ENCODE measurements at regions of chr19 and their contacts with region 1.

Region 1: DNA sequence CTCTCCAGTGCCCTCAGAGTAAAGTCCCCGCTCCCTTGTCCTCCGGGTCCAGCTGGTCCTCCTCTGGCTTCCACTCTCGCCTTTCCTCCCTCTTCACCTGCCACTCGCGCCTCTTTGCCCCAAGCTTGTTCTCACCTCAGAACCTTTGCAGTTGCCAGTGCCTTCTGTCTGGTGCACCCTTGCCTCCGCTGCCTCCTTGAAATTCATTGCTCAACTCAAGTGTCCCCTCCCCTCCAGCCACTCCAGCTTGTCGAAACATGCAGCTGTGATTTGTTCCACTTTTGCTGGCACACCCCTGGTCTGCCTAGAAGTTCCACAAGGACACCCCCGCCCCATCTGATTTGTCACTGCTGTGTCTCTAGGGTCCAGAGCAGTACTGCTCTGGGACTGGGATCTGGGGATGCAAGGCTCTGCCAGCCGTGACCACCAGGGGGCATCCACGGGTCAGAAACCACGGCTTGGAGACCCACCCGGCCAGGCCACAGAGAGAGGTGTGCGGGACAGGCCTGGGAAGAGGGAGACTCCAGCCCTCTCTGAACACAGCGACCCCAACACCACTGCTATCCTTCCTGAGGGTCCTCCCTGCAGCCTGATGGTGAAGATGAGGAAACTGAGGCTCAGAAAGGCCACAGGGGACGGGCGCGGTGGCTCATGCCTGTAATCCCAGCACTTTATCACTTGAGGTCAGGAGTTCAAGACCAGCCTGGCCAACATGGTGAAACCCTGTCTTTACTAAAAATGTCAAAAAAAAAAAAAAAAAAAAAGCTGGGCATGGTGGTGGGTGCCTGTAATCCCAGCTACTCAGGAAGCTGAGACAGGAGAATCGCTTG is 49.9 kb downstream of the AP1M1 start:
- DNase-seq: peak; percentile 48
- H3K4me3 ChIP-seq: no peak overlapping the region
- H3K27ac ChIP-seq: no peak overlapping the region
- H3K4me1 ChIP-seq: no peaks in the 10 kb centered on the region
- H3K27me3 ChIP-seq: no peaks in the 10 kb centered on the region
- CTCF ChIP-seq: peak; percentile 80 to 93

Region 2: GRCh38 chr19:15776991-15777970 is 470.3 kb before region 1 on chr19:
- CTCF ChIA-PET with region 1: no interaction called
- dilution Hi-C with region 1: no loop called
- in situ Hi-C with region 1: no loop called
- intact Hi-C with region 1: no loop called
- DNase-seq: no peak
- H3K4me3 ChIP-seq: no peak overlapping the region
- H3K27ac ChIP-seq: no peak overlapping the region
- H3K4me1 ChIP-seq: no peaks in the 10 kb centered on the region
- H3K27me3 ChIP-seq: no peaks in the 10 kb centered on the region
- CTCF ChIP-seq: no peak

Region 3: DNA sequence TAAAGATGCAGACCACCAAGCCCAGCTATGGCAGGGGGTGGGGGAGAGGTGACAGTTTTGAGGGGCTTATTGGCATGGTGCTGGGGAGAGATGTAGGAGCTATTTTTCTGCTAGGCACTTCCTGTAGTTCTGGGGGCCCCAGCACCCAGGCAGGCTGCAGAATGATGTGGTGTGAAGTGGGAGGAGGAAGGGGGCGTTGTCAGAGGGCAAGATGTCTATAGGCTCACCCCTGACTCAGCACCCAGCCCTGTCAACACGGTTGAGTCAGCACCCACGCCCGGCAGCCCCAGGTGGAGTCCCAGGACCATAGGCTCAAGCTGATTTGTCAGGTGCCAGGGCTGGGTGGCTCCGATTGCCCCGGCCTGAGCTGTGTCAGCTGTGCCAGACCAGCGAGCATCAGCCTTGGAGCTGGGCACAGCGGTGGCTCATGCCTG is 82.8 kb after region 1 on chr19:
- CTCF ChIA-PET with region 1: no interaction called
- dilution Hi-C with region 1: no loop called
- in situ Hi-C with region 1: no loop called
- intact Hi-C with region 1: loop called (anchors 2 kb)
- DNase-seq: peak; percentile 96
- H3K4me3 ChIP-seq: no peak overlapping the region
- H3K27ac ChIP-seq: no peak overlapping the region
- H3K4me1 ChIP-seq: peaks cover 4% of the 10 kb centered on the region
- H3K27me3 ChIP-seq: no peaks in the 10 kb centered on the region
- CTCF ChIP-seq: no peak

Region 4: GRCh38 chr19:16382775-16383543 is 135.4 kb after region 1 on chr19:
- CTCF ChIA-PET with region 1: interaction called, 27 read pairs
- dilution Hi-C with region 1: no loop called
- in situ Hi-C with region 1: loop called (anchors 5 kb)
- intact Hi-C with region 1: loop called (anchors 1 kb)
- DNase-seq: peak; percentile 59
- H3K4me3 ChIP-seq: no peak overlapping the region
- H3K27ac ChIP-seq: no peak overlapping the region
- H3K4me1 ChIP-seq: no peaks in the 10 kb centered on the region
- H3K27me3 ChIP-seq: no peaks in the 10 kb centered on the region
- CTCF ChIP-seq: peak; percentile 81 to 85

Region 5: GRCh38 chr19:16417660-16418596 is 170.4 kb after region 1 on chr19:
- CTCF ChIA-PET with region 1: no interaction called
- dilution Hi-C with region 1: no loop called
- in situ Hi-C with region 1: no loop called
- intact Hi-C with region 1: loop called (anchors 1 kb)
- DNase-seq: peak; percentile 29
- H3K4me3 ChIP-seq: no peak overlapping the region
- H3K27ac ChIP-seq: no peak overlapping the region
- H3K4me1 ChIP-seq: no peaks in the 10 kb centered on the region
- H3K27me3 ChIP-seq: no peaks in the 10 kb centered on the region
- CTCF ChIP-seq: peak; percentile 67 to 88